ENCODE measurements at regions of chr15 and their contacts with region 1.

Region 1: GRCh38 chr15:65028921-65029735 is at the start of gene MTFMT:
- DNase-seq: peak; percentile 71
- ATAC-seq: peak; percentile 70
- H3K4me3 ChIP-seq: peak within 1 kb of the TSS; percentile 91
- H3K27ac ChIP-seq: no peak within 1 kb of the TSS
- H3K4me1 ChIP-seq: peaks cover 13% of the 10 kb centered on the region; the same call in 1 of the 2 replicates
- H3K27me3 ChIP-seq: no peaks in the 10 kb centered on the region
- CTCF ChIP-seq: no peak
- total RNA-seq, gene MTFMT: 15.5 and 31.3 TPM in 2 replicates

Region 2: DNA sequence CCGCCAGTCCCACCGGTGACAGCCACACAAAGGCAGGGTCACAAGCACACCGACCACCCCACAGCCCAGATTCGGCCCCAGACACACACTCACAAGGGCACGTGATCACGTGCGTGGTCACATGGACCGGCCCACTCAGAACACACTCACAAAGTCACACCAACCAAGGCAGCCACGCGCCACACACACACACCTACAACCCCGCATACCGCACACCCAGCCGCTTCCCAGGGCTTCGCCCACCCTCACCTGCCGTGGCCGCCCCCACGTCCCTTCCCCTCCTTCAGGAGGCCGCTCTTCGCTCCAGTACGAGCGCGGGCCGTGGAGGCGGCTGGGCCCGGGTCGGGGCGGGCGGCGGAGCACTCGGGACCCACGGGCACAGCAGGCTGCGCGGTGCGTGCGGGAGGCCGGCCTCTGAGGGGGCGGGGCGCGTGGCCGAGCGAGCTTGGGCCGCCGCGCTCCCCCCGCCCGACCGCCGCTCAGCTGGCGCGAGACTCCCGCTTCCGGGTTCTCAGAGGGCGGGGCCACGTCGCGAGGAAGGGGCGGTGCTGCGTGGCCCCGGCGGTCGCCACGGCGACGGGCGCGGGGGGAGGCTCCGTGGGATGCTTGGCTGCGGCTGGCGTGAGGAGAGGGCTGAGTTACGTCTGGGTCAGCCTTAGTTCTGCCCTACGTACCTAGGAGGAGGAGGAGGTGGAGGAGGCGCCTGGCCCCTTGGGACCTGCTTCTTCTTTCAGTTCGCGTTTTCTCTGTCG is 39.5 kb before region 1 on chr15 and contains the start of gene SPG21:
- CTCF ChIA-PET with region 1: no interaction called
- POLR2A ChIA-PET with region 1: no interaction called
- intact Hi-C with region 1: loop called (anchors 5 kb)
- DNase-seq: peak; percentile 87
- ATAC-seq: peak; percentile 88
- H3K4me3 ChIP-seq: peak within 1 kb of the TSS; percentile 97
- H3K27ac ChIP-seq: peak within 1 kb of the TSS; percentile 43; the same call in 1 of the 2 replicates
- H3K4me1 ChIP-seq: peaks cover 32% of the 10 kb centered on the region
- H3K27me3 ChIP-seq: no peaks in the 10 kb centered on the region
- CTCF ChIP-seq: no peak
- total RNA-seq, gene SPG21: 53.0 and 53.8 TPM in 2 replicates

Region 3: GRCh38 chr15:65054333-65055200 is 25.4 kb after region 1 on chr15:
- CTCF ChIA-PET with region 1: no interaction called
- POLR2A ChIA-PET with region 1: no interaction called
- intact Hi-C with region 1: loop called (anchors 1 kb)
- DNase-seq: peak; percentile 65
- ATAC-seq: peak; percentile 80
- H3K4me3 ChIP-seq: no peak overlapping the region
- H3K27ac ChIP-seq: no peak overlapping the region
- H3K4me1 ChIP-seq: peaks cover 22% of the 10 kb centered on the region
- H3K27me3 ChIP-seq: no peaks in the 10 kb centered on the region
- CTCF ChIP-seq: peak; percentile 79

Region 4: GRCh38 chr15:65086017-65086679 is 57.0 kb after region 1 on chr15:
- CTCF ChIA-PET with region 1: no interaction called
- POLR2A ChIA-PET with region 1: no interaction called
- intact Hi-C with region 1: loop called (anchors 1 kb)
- DNase-seq: peak; percentile 55
- ATAC-seq: peak; percentile 80
- H3K4me3 ChIP-seq: no peak overlapping the region
- H3K27ac ChIP-seq: no peak overlapping the region
- H3K4me1 ChIP-seq: no peaks in the 10 kb centered on the region
- H3K27me3 ChIP-seq: no peaks in the 10 kb centered on the region
- CTCF ChIP-seq: peak; percentile 62

Region 5: DNA sequence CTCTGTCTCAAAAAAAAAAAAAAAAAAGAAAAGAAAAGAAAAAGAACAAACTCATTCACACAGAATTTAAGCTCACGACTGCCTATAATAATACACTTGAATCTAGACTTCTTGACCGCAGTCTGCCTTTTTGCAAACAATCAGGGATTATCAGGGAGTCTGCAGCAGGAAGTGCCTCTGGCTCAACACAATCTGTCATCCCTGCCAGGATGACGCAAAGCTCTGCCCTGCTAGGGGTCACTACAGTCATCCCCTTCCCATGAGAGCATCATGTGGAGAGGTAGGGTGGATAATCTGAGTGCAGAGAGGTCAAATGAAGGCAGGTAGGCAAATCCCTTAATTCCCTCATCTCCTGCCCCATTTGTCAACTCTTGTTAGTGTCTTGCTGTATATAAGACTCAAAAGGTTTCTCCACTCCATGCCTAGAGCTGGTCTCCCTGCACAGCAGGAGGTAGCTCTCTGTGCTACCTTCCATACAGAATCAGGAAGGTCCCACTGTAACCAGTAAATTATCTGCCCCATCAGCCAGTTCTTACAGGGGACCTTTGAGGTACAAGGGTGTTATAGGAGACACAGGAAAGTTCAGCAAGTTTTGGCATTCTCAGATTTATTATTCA is 81.7 kb after region 1 on chr15:
- CTCF ChIA-PET with region 1: no interaction called
- POLR2A ChIA-PET with region 1: no interaction called
- intact Hi-C with region 1: no loop called
- DNase-seq: no peak
- ATAC-seq: no peak
- H3K4me3 ChIP-seq: no peak overlapping the region
- H3K27ac ChIP-seq: no peak overlapping the region
- H3K4me1 ChIP-seq: no peaks in the 10 kb centered on the region
- H3K27me3 ChIP-seq: no peaks in the 10 kb centered on the region
- CTCF ChIP-seq: no peak

Region 6: DNA sequence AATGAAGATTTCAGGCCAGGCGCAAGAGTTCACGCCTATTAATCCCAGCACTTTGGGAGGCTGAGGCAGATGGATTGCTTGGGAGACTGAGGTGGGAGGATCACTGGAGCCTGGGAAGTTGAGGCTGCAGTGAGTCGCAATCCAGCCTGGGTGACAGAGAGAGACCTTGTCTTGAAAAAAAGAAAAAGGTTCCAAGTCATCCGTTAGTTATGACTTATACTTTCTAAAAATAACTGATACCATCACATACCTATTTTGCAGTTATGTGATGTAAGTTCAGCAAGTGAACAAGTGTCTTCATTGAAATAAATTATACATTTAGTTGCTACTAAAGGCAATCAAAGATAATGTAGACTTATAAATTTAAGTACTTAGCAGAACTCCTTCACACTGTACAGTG is 133.9 kb after region 1 on chr15:
- CTCF ChIA-PET with region 1: no interaction called
- POLR2A ChIA-PET with region 1: no interaction called
- intact Hi-C with region 1: no loop called
- DNase-seq: no peak
- ATAC-seq: no peak
- H3K4me3 ChIP-seq: no peak overlapping the region
- H3K27ac ChIP-seq: no peak overlapping the region
- H3K4me1 ChIP-seq: no peaks in the 10 kb centered on the region
- H3K27me3 ChIP-seq: no peaks in the 10 kb centered on the region
- CTCF ChIP-seq: no peak

Region 7: DNA sequence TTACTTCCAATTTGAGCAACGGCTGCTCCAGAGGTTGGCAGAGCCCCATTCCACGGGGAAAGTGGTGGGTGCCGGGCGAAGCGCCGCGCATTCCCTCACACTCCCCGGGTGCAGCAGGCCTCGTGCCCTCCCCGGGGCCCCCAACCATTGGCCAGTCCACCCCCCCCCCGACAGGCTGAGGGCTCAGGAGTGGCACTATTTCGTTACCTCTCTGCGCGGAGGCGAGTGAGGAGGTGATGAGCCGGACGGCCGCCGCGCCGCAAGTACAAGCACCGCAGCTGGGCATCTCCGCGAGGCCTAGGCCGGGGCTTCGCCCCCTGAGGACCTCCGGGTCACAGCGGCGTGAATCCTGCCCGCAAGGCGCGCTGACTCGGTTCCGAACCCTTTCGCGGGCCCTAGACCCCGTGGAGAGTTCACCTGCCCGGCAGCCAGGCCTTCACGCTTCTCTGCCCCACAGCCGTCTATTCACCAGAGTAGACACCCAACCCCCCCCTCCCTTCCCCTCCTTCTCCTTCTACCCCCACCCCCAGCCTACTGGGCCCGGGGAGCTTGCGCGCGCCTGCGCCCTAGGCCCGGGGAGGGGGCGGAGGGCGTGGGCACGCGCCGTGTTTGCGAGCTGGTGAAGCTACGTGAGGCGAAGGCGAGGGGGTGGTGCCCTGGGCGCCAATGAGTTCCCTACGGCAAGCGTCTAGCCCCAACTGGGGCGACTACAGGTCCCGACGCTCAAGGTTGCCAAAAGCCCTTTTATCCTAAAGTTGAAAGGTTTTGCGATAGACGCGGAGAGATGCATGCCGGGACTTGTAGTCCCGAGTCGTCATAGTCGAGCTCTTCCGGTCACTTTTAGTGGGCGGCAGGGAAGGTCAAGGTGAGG is 156.0 kb after region 1 on chr15 and contains the start of gene CLPX:
- CTCF ChIA-PET with region 1: no interaction called
- POLR2A ChIA-PET with region 1: no interaction called
- intact Hi-C with region 1: loop called (anchors 1 kb)
- DNase-seq: peak; percentile 80
- ATAC-seq: peak; percentile 79
- H3K4me3 ChIP-seq: peak within 1 kb of the TSS; percentile 85
- H3K27ac ChIP-seq: peak within 1 kb of the TSS; percentile 41
- H3K4me1 ChIP-seq: peaks cover 10% of the 10 kb centered on the region
- H3K27me3 ChIP-seq: no peaks in the 10 kb centered on the region
- CTCF ChIP-seq: no peak
- total RNA-seq, gene CLPX: 19.3 and 22.5 TPM in 2 replicates

Region 8: DNA sequence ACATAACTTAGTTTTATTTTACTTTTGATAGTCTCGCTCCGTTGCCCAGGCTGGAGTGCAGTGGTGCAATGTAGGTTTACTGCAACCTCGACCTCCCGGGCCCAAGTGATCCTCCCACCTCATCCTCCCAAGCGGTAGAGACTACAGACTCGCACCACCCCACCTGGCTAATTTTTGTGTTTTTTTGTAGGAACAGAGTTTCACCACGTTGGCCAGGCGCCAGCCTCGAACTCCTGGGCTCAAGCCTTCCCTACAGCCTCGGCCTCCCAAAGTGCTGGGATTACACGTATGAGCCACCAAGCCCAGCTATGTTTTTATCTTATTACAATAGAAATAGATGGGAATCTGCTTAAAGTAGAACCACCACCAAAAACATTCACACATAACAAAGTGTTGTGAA is 269.6 kb after region 1 on chr15:
- CTCF ChIA-PET with region 1: no interaction called
- POLR2A ChIA-PET with region 1: no interaction called
- intact Hi-C with region 1: loop called (anchors 5 kb)
- DNase-seq: no peak
- ATAC-seq: no peak
- H3K4me3 ChIP-seq: no peak overlapping the region
- H3K27ac ChIP-seq: no peak overlapping the region
- H3K4me1 ChIP-seq: no peaks in the 10 kb centered on the region; the same call in 1 of the 2 replicates
- H3K27me3 ChIP-seq: no peaks in the 10 kb centered on the region
- CTCF ChIP-seq: no peak

Measured in PC-3 (cell line).